ENCODE measurements at regions of chr18 and their contacts with region 1.

Region 1: DNA sequence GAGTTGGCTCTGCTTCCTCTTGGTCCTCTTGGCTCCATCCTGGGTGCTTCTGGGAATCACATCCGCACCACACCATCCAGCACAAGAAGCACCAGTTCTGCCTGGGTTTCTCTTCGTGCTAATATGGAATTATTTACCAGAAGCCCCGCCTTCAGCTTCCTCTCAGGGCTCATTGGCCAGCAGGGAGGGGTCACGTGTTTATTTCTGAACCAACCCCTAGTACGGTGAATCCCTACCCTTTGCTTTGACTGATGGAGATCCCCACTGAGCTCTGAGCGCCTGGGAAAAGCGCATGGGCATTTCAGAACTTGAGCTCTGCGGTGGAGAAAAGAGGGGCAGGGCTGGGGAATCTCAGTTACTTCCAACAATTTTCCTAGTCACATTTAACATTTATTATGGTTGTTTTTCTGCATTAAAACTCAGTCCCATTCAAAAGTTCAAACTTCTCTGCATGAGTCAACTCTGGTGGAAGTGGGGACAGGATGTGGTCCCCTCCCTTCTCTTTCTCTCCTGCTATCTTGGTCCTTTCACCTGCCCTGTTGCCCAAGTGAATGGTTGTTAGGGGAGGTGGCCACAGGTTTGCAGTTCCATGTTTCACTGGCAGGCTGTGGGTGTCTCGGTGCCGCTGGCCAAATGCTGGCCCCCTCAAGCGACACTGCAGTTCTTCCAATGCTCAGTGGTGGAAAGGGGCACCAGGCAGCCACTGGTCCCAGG is 76.4 kb upstream of the TTC39C start:
- DNase-seq: peak in 1 of 2 donors; percentile 70
- H3K4me3 ChIP-seq: no peak overlapping the region
- H3K27ac ChIP-seq: no peak overlapping the region
- H3K4me1 ChIP-seq: no peaks in the 10 kb centered on the region
- H3K27me3 ChIP-seq: no peaks in the 10 kb centered on the region
- CTCF ChIP-seq: no peak
- POLR2A ChIP-seq: no peak

Region 2: GRCh38 chr18:23735021-23735464 is 203.2 kb before region 1 on chr18:
- intact Hi-C with region 1: no loop called
- DNase-seq: no peak
- H3K4me3 ChIP-seq: no peak overlapping the region
- H3K27ac ChIP-seq: peak overlapping the region; percentile 33
- H3K4me1 ChIP-seq: peaks cover 47% of the 10 kb centered on the region
- H3K27me3 ChIP-seq: no peaks in the 10 kb centered on the region
- CTCF ChIP-seq: no peak
- POLR2A ChIP-seq: no peak

Region 3: DNA sequence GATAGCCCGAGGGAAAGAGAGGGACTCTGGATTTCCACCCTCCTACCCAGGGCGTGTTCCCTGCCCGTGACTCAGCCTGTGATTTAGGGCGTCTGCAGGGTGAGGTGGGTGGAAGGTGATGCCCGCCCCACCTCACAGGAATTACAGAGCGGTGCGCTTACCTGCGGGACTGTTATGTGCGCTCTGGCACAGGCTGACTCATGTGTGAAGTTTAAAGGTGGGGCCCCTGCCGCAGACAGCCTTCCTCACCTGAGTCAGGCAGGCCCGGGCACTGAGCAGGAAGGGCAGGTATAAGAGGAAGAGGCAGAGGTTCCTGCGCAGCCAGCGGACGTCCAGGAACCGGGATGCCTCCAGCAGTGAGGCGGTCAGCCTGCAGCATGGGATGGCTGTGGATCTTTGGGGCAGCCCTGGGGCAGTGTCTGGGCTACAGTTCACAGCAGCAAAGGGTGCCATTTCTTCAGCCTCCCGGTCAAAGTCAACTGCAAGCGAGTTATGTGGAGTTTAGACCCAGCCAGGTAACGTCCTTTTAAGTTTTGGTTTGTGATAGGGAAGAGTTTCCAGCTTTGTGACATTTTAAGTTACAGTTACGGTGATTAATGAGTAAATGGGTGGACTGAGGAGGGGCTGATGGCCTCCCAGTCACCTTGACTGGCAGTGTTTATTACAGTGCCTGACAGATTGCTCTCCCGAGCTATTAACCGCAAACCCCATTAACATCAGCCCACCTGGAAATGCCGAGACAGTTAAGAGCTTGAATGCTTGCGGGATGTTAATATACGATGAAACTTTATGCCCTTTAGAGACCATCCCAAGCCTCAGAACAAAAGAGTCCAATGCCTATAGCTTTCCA is 65.3 kb before region 1 on chr18:
- intact Hi-C with region 1: no loop called
- DNase-seq: peak; percentile 90 to 98
- H3K4me3 ChIP-seq: peak overlapping the region in 1 of 2 donors; percentile 42
- H3K27ac ChIP-seq: peak overlapping the region; percentile 60
- H3K4me1 ChIP-seq: no peaks in the 10 kb centered on the region
- H3K27me3 ChIP-seq: no peaks in the 10 kb centered on the region
- CTCF ChIP-seq: no peak
- POLR2A ChIP-seq: no peak

Region 4: GRCh38 chr18:23994361-23994902 is 56.2 kb after region 1 on chr18:
- intact Hi-C with region 1: no loop called
- DNase-seq: no peak
- H3K4me3 ChIP-seq: no peak overlapping the region
- H3K27ac ChIP-seq: no peak overlapping the region
- H3K4me1 ChIP-seq: peaks cover 20% of the 10 kb centered on the region
- H3K27me3 ChIP-seq: no peaks in the 10 kb centered on the region
- CTCF ChIP-seq: no peak
- POLR2A ChIP-seq: peak in 1 of 2 donors; percentile 21

Region 5: DNA sequence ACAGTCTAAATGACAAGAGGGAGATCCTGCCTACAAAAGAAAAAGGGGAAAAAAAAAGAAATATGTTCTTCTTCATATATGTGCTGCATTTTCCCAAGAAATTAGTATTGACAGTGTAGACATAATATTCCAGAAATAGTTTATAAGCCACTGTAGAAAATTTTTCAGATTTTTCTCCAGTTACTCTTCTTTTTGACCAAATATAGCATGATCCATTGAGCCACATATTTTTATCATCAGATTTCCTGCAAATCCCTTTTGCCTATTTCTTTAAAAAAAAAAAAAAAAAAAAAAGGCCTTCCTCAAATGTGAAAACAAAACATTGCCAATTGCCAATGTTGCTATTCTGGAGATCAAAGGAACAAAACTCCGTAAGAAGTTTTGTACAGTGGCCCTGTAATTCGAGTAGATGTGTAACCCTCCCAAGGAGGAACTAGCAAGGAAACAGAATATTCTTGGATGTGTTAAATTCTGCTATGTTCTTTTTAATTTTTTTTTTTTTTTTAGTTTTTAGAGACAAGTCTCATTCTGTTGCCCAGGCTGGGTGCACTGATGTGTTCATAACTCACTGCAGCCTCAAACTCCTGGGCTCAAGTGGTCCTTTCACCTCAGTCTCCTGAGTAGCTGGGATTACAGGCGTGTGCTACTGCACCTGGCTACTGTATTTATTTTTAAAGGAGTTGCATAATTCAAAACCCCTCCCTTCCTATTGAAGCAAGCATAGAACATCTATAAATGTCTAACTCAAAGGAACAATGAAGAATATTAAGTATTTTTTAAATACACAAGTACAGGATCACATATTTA is 188.2 kb after region 1 on chr18:
- intact Hi-C with region 1: loop called (anchors 10 kb)
- DNase-seq: no peak
- H3K4me3 ChIP-seq: no peak overlapping the region
- H3K27ac ChIP-seq: no peak overlapping the region
- H3K4me1 ChIP-seq: no peaks in the 10 kb centered on the region
- H3K27me3 ChIP-seq: no peaks in the 10 kb centered on the region
- CTCF ChIP-seq: no peak
- POLR2A ChIP-seq: no peak

Region 6: DNA sequence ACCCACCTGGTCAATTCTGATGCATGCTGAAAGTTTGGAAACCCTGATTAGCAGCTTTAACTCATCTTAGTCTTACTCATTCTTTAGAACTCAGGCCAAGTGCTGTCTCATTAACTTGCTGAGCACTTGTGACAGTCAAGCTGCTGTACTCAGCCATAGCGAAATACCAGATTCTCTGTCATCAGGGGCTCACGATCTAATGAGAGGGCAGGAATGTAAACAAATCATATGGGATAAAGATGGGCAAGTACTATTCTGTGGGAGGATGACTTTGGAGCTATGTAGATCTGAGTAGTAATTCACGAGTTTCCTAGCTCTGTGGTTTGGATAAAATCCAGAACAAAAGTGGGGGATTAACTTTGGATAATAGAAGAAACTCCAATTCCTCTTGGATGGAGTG is 898.9 kb after region 1 on chr18:
- intact Hi-C with region 1: no loop called
- DNase-seq: no peak
- H3K4me3 ChIP-seq: no peak overlapping the region
- H3K27ac ChIP-seq: no peak overlapping the region
- H3K4me1 ChIP-seq: no peaks in the 10 kb centered on the region
- H3K27me3 ChIP-seq: no peaks in the 10 kb centered on the region
- CTCF ChIP-seq: no peak
- POLR2A ChIP-seq: no peak

Measured in vagina (tissue), 2 donors.